ENCODE measurements at regions of chr11 and their contacts with region 1.

Region 1: GRCh38 chr11:20127671-20128527 is 32.4 kb downstream of the DBX1 start:
- DNase-seq: peak; percentile 48
- H3K4me3 ChIP-seq: no peak overlapping the region
- H3K27ac ChIP-seq: no peak overlapping the region
- H3K27me3 ChIP-seq: no peaks in the 10 kb centered on the region
- CTCF ChIP-seq: peak; percentile 89

Region 2: GRCh38 chr11:19903620-19904069 is 224.3 kb before region 1 on chr11:
- CTCF ChIA-PET with region 1: interaction called, 66 read pairs
- POLR2A ChIA-PET with region 1: no interaction called
- DNase-seq: peak; percentile 64
- H3K4me3 ChIP-seq: no peak overlapping the region
- H3K27ac ChIP-seq: no peak overlapping the region
- H3K27me3 ChIP-seq: no peaks in the 10 kb centered on the region
- CTCF ChIP-seq: peak; percentile 87

Region 3: GRCh38 chr11:19931141-19931770 is 196.6 kb before region 1 on chr11:
- CTCF ChIA-PET with region 1: interaction called, 28 read pairs
- POLR2A ChIA-PET with region 1: no interaction called
- DNase-seq: no peak
- H3K4me3 ChIP-seq: peak overlapping the region; percentile 34
- H3K27ac ChIP-seq: peak overlapping the region; percentile 31
- H3K27me3 ChIP-seq: no peaks in the 10 kb centered on the region
- CTCF ChIP-seq: no peak

Region 4: DNA sequence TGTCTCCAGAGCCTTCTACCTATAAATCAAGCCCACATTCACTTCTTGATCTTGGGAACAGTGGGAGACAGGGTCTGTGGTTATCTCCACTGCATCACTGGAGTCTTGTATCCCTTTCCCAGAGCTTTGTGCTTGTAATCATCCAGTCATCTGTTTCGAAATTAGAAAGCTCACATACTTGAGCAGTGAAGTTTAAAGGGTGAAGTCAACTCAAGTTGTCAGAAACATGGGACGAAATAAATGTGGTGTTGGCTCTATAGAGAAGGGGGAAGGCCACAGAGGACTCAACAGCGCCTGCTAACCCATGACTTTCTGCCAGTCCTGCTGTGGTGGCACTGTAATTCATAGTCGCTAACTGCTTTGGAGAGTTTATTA is 165.1 kb before region 1 on chr11:
- CTCF ChIA-PET with region 1: interaction called, 20 read pairs
- POLR2A ChIA-PET with region 1: no interaction called
- DNase-seq: peak; percentile 82
- H3K4me3 ChIP-seq: no peak overlapping the region
- H3K27ac ChIP-seq: peak overlapping the region; percentile 91
- H3K27me3 ChIP-seq: no peaks in the 10 kb centered on the region
- CTCF ChIP-seq: no peak

Region 5: GRCh38 chr11:20035701-20036620 is 91.9 kb before region 1 on chr11:
- CTCF ChIA-PET with region 1: interaction called, 10 read pairs
- POLR2A ChIA-PET with region 1: no interaction called
- DNase-seq: peak; percentile 74
- H3K4me3 ChIP-seq: no peak overlapping the region
- H3K27ac ChIP-seq: peak overlapping the region; percentile 63
- H3K27me3 ChIP-seq: no peaks in the 10 kb centered on the region
- CTCF ChIP-seq: no peak

Region 6: GRCh38 chr11:20355221-20356219 is 227.6 kb after region 1 on chr11:
- CTCF ChIA-PET with region 1: interaction called, 80 read pairs
- POLR2A ChIA-PET with region 1: no interaction called
- DNase-seq: no peak
- H3K4me3 ChIP-seq: no peak overlapping the region
- H3K27ac ChIP-seq: no peak overlapping the region
- H3K27me3 ChIP-seq: no peaks in the 10 kb centered on the region
- CTCF ChIP-seq: peak; percentile 61